Aorta (tissue), 5 donors: ENCODE measurements at regions of chr3 and their contacts with region 1.

Region 1: GRCh38 chr3:168847291-168847883 is 751.7 kb upstream of the GOLIM4 start:
- DNase-seq: no peak
- ATAC-seq: peak; percentile 64
- H3K4me3 ChIP-seq: peak overlapping the region in 1 of 2 donors; percentile 14
- H3K27ac ChIP-seq: no peak overlapping the region
- H3K4me1 ChIP-seq: no peaks in the 10 kb centered on the region
- H3K27me3 ChIP-seq: no peaks in the 10 kb centered on the region

Region 2: GRCh38 chr3:168213920-168214319 is 633.5 kb before region 1 on chr3:
- intact Hi-C with region 1: loop called (anchors 2 to 5 kb)
- DNase-seq: no peak
- ATAC-seq: no peak
- H3K4me3 ChIP-seq: no peak overlapping the region
- H3K27ac ChIP-seq: no peak overlapping the region
- H3K4me1 ChIP-seq: no peaks in the 10 kb centered on the region
- H3K27me3 ChIP-seq: no peaks in the 10 kb centered on the region

Region 3: GRCh38 chr3:168511428-168512014 is 335.9 kb before region 1 on chr3:
- intact Hi-C with region 1: loop called in 1 of 2 experiments (anchors 5 kb)
- DNase-seq: no peak
- ATAC-seq: no peak
- H3K4me3 ChIP-seq: no peak overlapping the region
- H3K27ac ChIP-seq: no peak overlapping the region
- H3K4me1 ChIP-seq: no peaks in the 10 kb centered on the region
- H3K27me3 ChIP-seq: no peaks in the 10 kb centered on the region